Breast epithelium (tissue), 4 donors: ENCODE measurements at regions of chr3 and their contacts with region 1.

Region 1: GRCh38 chr3:110666495-110667128 is 405.0 kb upstream of the NECTIN3 start:
- DNase-seq: no peak
- H3K4me3 ChIP-seq: no peak overlapping the region
- H3K27ac ChIP-seq: no peak overlapping the region
- H3K4me1 ChIP-seq: no peaks in the 10 kb centered on the region
- H3K27me3 ChIP-seq: no peaks in the 10 kb centered on the region
- CTCF ChIP-seq: no peak
- POLR2A ChIP-seq: no peak

Region 2: GRCh38 chr3:110680450-110680849 is 13.8 kb after region 1 on chr3:
- intact Hi-C with region 1: loop called (anchors 1 kb)
- DNase-seq: no peak
- H3K4me3 ChIP-seq: no peak overlapping the region
- H3K27ac ChIP-seq: no peak overlapping the region
- H3K4me1 ChIP-seq: no peaks in the 10 kb centered on the region
- H3K27me3 ChIP-seq: no peaks in the 10 kb centered on the region
- CTCF ChIP-seq: no peak
- POLR2A ChIP-seq: no peak